Naive thymus-derived CD4-positive, alpha-beta T cell (primary cell): ENCODE measurements at regions of chr9 and their contacts with region 1.

Region 1: GRCh38 chr9:111483862-111484571 is at the start of gene ECPAS:
- DNase-seq: peak; percentile 53 to 78 (median 62)
- ATAC-seq: peak; percentile 74
- H3K4me3 ChIP-seq: peak within 1 kb of the TSS; percentile 66
- H3K4me3 Mint-ChIP-seq: peak within 1 kb of the TSS; percentile 69 to 93 (median 88)
- H3K27ac ChIP-seq: peak within 1 kb of the TSS; percentile 74
- H3K27ac Mint-ChIP-seq: peak within 1 kb of the TSS; percentile 60 to 92 (median 85)
- H3K4me1 ChIP-seq: peaks cover 0 to 8% of the 10 kb centered on the region in 2 donors
- H3K4me1 Mint-ChIP-seq: peaks cover 16 to 31% (median 27%) of the 10 kb centered on the region in 7 donors
- H3K27me3 ChIP-seq: no peaks in the 10 kb centered on the region
- H3K27me3 Mint-ChIP-seq: peaks cover 0 to 13% (median 5%) of the 10 kb centered on the region in 5 donors
- total RNA-seq, gene ECPAS: 35.4 to 86.1 (median 49.2) TPM

Region 2: DNA sequence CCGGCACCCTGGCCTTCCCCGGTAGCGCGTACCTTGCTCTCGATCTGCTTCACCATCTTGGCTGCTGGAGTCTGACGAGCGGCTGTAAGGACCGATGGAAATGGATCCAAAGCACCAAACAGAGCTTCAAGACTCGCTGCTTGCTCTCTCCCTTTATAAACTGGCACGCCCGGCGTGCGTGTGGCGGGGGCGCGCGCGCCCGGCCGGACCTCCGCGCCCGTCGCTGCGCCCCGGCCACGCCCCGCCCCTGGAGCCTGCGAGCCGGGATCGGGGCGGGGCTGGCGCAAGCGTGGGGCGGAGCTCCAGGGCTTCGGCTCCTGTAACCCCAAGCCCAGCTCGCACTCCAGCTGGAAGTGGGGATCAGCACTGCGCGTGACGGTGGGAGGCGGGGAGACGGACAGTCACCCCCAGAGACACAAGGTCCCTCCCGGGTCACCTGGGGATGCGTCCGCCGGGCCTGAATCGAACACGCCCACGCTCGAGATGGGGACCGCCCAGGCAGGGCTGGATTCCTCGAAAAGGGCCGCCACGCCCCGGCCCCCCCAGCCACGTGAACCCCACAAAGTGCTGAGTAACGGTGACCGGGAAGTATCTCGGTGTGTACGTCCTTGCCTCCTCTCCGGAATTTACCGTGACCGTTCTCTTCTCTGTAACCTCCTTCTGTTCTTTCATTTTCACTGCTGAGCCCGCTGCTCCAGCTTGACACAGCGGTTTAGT is 1227.5 kb before region 1 on chr9 and contains the start of gene TXN:
- CTCF ChIA-PET with region 1: no interaction called
- POLR2A ChIA-PET with region 1: no interaction called
- intact Hi-C with region 1: loop called in 1 of 2 experiments (anchors 5 kb)
- DNase-seq: peak; percentile 56 to 91 (median 74)
- ATAC-seq: peak; percentile 88
- H3K4me3 ChIP-seq: peak within 1 kb of the TSS; percentile 85
- H3K4me3 Mint-ChIP-seq: peak within 1 kb of the TSS; percentile 83 to 99 (median 96)
- H3K27ac ChIP-seq: peak within 1 kb of the TSS; percentile 65
- H3K27ac Mint-ChIP-seq: peak within 1 kb of the TSS; percentile 87 to 97 (median 89)
- H3K4me1 ChIP-seq: peaks cover 4 to 11% of the 10 kb centered on the region in 2 donors
- H3K4me1 Mint-ChIP-seq: peaks cover 16 to 52% (median 32%) of the 10 kb centered on the region in 7 donors
- H3K27me3 ChIP-seq: no peaks in the 10 kb centered on the region
- H3K27me3 Mint-ChIP-seq: peaks cover 0 to 5% (median 0%) of the 10 kb centered on the region in 5 donors
- total RNA-seq, gene TXN: 22.2 to 276 (median 24.9) TPM

Region 3: DNA sequence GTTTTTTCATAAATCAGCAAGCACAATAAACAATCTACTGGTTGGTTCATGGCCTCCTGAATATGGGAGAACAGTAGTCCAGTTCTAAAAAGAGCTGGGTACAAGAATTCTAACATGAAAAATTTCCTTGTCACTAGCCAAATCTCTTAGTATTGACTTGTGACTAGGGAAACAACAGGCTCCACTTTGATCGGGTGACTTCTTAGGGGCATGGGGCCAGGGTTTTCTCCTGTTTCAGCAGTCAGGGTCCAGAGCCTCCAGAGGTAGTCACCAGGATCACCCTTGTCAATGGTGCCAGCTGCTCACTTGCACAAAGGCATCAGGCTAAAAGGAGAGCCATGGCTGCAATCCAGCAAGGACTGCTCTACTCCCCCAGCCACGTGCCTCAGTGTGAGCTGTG is 483.8 kb before region 1 on chr9:
- CTCF ChIA-PET with region 1: no interaction called
- POLR2A ChIA-PET with region 1: no interaction called
- intact Hi-C with region 1: no loop called
- DNase-seq: no peak
- ATAC-seq: no peak
- H3K4me3 ChIP-seq: no peak overlapping the region
- H3K4me3 Mint-ChIP-seq: no peak overlapping the region
- H3K27ac ChIP-seq: no peak overlapping the region
- H3K27ac Mint-ChIP-seq: no peak overlapping the region
- H3K4me1 ChIP-seq: no peaks in the 10 kb centered on the region
- H3K4me1 Mint-ChIP-seq: peaks cover 0 to 5% (median 0%) of the 10 kb centered on the region in 7 donors
- H3K27me3 ChIP-seq: no peaks in the 10 kb centered on the region
- H3K27me3 Mint-ChIP-seq: peaks cover 0 to 13% (median 0%) of the 10 kb centered on the region in 5 donors

Region 4: DNA sequence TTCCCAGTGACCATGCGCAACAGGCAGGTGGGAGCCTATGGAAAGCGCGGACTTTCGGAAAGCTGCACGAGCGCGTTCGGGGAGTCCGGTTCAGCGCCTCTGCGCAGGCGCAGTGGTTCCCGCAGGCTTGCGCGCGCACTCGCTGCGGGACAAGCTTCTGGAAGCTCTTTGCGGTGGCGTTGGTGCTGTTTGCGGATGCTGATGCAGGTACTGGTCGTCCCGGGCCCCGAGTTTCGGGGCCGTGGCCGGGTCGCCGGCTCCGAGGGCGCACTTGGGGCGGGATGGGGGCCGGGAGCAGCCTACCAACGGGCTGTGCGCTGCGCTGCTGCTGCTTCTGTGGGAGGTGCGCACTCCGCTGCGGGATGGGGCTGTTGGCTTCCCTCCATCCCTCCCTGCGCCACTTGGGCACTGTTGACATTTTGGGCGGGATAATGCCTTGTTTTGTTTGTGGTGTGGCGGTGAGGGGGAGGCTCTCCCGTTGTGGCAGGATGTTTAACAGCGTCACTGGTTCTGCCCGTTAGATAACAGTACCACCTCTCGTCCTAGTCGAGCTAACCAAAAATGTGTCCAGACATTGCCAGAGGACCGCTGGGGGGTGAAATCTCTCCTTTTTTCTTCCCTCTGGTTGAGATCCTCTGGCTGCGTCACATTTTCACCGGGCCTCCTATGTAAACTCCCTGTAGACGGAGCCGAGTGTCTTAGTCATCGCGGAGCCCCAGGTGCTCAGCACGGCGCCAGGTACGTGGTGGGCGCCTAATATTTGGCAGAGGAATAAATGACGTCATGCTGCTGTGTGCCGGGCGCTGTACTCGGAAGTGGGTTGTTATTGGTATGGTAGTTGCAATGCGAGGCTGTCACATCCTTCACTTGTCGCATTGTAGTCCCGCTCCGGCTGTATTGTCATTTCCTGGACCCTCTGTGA is 41.3 kb after region 1 on chr9 and contains the start of gene ZNF483:
- CTCF ChIA-PET with region 1: no interaction called
- POLR2A ChIA-PET with region 1: interaction called, 11 read pairs
- intact Hi-C with region 1: loop called (anchors 1 kb)
- DNase-seq: peak; percentile 60 to 89 (median 75)
- ATAC-seq: peak; percentile 90
- H3K4me3 ChIP-seq: peak within 1 kb of the TSS; percentile 84
- H3K4me3 Mint-ChIP-seq: peak within 1 kb of the TSS; percentile 86 to 98 (median 92)
- H3K27ac ChIP-seq: peak within 1 kb of the TSS; percentile 86
- H3K27ac Mint-ChIP-seq: peak within 1 kb of the TSS; percentile 90 to 99 (median 96)
- H3K4me1 ChIP-seq: peaks cover 4 to 6% of the 10 kb centered on the region in 2 donors
- H3K4me1 Mint-ChIP-seq: peaks cover 16 to 31% (median 21%) of the 10 kb centered on the region in 7 donors
- H3K27me3 ChIP-seq: no peaks in the 10 kb centered on the region
- H3K27me3 Mint-ChIP-seq: peaks cover 0 to 15% (median 5%) of the 10 kb centered on the region in 5 donors
- total RNA-seq, gene ZNF483: 3.0 to 37.1 (median 16.0) TPM

Region 5: DNA sequence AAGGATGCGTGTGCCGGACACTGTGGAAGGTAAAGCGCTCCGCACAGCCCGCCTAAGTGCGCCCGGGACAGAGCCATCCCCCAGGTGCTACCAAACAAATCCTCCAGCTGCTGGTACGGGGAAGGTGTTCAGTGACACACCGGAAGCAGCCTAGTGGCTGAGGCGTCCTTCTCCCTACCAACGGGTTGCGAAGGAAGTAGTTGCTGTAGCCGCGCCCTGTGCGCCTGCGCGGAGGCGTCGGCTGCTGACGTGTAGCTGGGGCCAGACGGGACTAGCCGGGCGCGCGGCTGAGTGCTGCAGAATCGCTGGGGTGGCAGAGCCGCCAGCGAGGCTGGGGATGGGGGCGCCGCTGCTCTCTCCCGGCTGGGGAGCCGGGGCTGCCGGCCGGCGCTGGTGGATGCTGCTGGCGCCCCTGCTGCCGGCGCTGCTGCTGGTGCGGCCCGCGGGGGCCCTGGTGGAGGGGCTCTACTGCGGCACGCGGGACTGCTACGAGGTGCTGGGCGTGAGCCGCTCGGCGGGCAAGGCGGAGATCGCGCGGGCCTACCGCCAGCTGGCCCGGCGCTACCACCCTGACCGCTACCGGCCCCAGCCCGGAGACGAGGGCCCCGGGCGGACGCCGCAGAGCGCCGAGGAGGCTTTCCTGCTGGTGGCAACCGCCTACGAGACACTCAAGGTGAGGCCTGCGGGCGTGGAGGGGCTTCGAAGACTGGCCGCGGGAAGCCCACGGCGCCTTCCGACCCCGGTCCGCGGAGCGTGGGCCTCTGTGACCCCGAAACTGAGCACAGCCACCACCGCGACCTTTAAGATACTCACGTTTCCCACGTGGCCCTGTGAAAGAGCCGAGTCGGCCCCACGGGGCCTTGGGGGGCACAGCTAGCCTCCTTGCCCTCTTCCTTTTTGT is 147.3 kb after region 1 on chr9 and contains the start of gene DNAJC25:
- CTCF ChIA-PET with region 1: no interaction called
- POLR2A ChIA-PET with region 1: interaction called, 3 read pairs
- intact Hi-C with region 1: loop called (anchors 1 kb)
- DNase-seq: peak; percentile 94 to 98 (median 97)
- ATAC-seq: peak; percentile 97
- H3K4me3 ChIP-seq: peak within 1 kb of the TSS; percentile 82
- H3K4me3 Mint-ChIP-seq: peak within 1 kb of the TSS; percentile 81 to 99 (median 94)
- H3K27ac ChIP-seq: peak within 1 kb of the TSS; percentile 83
- H3K27ac Mint-ChIP-seq: peak within 1 kb of the TSS; percentile 78 to 95 (median 89)
- H3K4me1 ChIP-seq: peaks cover 14 to 21% of the 10 kb centered on the region in 2 donors
- H3K4me1 Mint-ChIP-seq: peaks cover 29 to 57% (median 47%) of the 10 kb centered on the region in 7 donors
- H3K27me3 ChIP-seq: no peaks in the 10 kb centered on the region
- H3K27me3 Mint-ChIP-seq: no peaks in the 10 kb centered on the region
- total RNA-seq, gene DNAJC25: 4.0 to 6.0 (median 5.2) TPM

Region 6: GRCh38 chr9:112174218-112174964 is 690.4 kb after region 1 on chr9:
- CTCF ChIA-PET with region 1: no interaction called
- POLR2A ChIA-PET with region 1: no interaction called
- intact Hi-C with region 1: loop called in 1 of 2 experiments (anchors 5 kb)
- DNase-seq: peak; percentile 42 to 80 (median 63)
- ATAC-seq: peak; percentile 87
- H3K4me3 ChIP-seq: peak overlapping the region; percentile 67
- H3K4me3 Mint-ChIP-seq: peak overlapping the region; percentile 83 to 94 (median 90)
- H3K27ac ChIP-seq: peak overlapping the region; percentile 9
- H3K27ac Mint-ChIP-seq: peak overlapping the region; percentile 65 to 95 (median 87)
- H3K4me1 ChIP-seq: peaks cover 33 to 54% of the 10 kb centered on the region in 2 donors
- H3K4me1 Mint-ChIP-seq: peaks cover 49 to 81% (median 73%) of the 10 kb centered on the region in 7 donors
- H3K27me3 ChIP-seq: no peaks in the 10 kb centered on the region
- H3K27me3 Mint-ChIP-seq: peaks cover 0 to 3% (median 0%) of the 10 kb centered on the region in 5 donors

Region 7: GRCh38 chr9:112717661-112718341 is 1233.8 kb after region 1 on chr9 and contains the start of gene INIP:
- CTCF ChIA-PET with region 1: no interaction called
- POLR2A ChIA-PET with region 1: no interaction called
- intact Hi-C with region 1: loop called (anchors 2 to 5 kb)
- DNase-seq: peak; percentile 91 to 99 (median 98)
- ATAC-seq: peak; percentile 94
- H3K4me3 ChIP-seq: peak within 1 kb of the TSS; percentile 82
- H3K4me3 Mint-ChIP-seq: peak within 1 kb of the TSS; percentile 83 to 100 (median 96)
- H3K27ac ChIP-seq: peak within 1 kb of the TSS; percentile 96
- H3K27ac Mint-ChIP-seq: peak within 1 kb of the TSS; percentile 96 to 100 (median 99)
- H3K4me1 ChIP-seq: peaks cover 10% of the 10 kb centered on the region in 2 donors
- H3K4me1 Mint-ChIP-seq: peaks cover 14 to 39% (median 28%) of the 10 kb centered on the region in 7 donors
- H3K27me3 ChIP-seq: no peaks in the 10 kb centered on the region
- H3K27me3 Mint-ChIP-seq: no peaks in the 10 kb centered on the region
- total RNA-seq, gene INIP: 13.8 to 35.0 (median 28.3) TPM

Region 8: DNA sequence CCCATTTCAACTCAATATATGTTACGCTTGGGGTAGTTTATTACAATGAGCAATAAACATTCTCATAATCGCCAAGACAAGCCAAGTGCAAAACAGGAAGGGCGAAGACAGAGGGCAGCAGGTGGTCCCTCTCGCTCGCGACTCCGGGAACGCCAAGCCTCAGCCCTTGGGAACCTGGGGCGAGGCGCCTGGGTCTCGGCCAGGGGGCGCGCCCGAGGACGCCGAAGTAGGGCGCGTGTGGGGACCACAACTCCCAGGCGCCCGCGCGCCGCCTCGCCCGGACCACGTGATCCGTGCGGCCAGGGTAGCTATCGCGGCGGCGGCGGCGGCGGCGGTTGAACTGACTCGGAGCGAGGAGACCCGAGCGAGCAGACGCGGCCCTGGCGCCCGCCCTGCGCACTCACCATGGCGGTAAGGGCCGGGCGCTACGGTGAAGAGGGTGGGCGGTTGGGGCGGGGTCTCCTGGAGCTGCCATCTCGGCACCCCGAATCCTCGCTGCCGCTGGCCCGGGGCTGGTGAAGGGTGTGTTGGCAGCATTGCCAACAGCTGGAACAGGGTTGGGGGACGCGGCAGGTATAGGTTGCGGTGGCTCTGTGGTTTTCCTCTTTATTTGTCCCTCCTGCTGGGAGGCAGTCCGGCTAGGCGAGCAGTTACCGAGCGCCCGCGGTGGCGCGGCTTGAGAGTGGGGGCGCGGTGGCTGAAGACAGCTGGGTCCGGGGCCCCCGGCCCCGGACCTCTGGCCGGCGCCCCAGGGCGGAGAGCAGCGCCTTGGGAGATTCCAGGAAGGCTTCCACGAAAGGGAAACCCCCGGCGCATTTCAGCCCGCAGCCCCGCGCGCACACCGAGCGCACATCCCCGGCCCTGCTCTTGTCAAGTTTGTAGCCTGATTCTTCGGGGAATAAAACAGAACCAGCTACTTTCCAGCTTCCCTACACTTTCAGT is 1666.9 kb after region 1 on chr9 and contains the start of gene SLC31A2:
- CTCF ChIA-PET with region 1: no interaction called
- POLR2A ChIA-PET with region 1: no interaction called
- intact Hi-C with region 1: loop called in 1 of 2 experiments (anchors 5 kb)
- DNase-seq: peak; percentile 73 to 93 (median 80)
- ATAC-seq: peak; percentile 92
- H3K4me3 ChIP-seq: peak within 1 kb of the TSS; percentile 78
- H3K4me3 Mint-ChIP-seq: peak within 1 kb of the TSS; percentile 58 to 88 (median 84)
- H3K27ac ChIP-seq: peak within 1 kb of the TSS; percentile 73
- H3K27ac Mint-ChIP-seq: peak within 1 kb of the TSS; percentile 38 to 76 (median 68)
- H3K4me1 ChIP-seq: peaks cover 10 to 15% of the 10 kb centered on the region in 2 donors
- H3K4me1 Mint-ChIP-seq: peaks cover 16 to 42% (median 36%) of the 10 kb centered on the region in 7 donors
- H3K27me3 ChIP-seq: no peaks in the 10 kb centered on the region
- H3K27me3 Mint-ChIP-seq: peaks cover 1 to 6% (median 4%) of the 10 kb centered on the region in 5 donors
- total RNA-seq, gene SLC31A2: 5.3 to 39.2 (median 5.4) TPM